IMR-90 (cell line): ENCODE measurements at regions of chr12 and their contacts with region 1.

Region 1: GRCh38 chr12:52870351-52871290 is 21.8 kb upstream of the KRT78 start:
- DNase-seq: peak; percentile 25
- ATAC-seq: peak; percentile 32
- H3K4me3 ChIP-seq: no peak overlapping the region
- H3K27ac ChIP-seq: peak overlapping the region; percentile 19; the same call in 1 of the 2 replicates
- H3K4me1 ChIP-seq: peaks cover 26% of the 10 kb centered on the region
- H3K27me3 ChIP-seq: no peaks in the 10 kb centered on the region
- CTCF ChIP-seq: peak; percentile 80
- POLR2A ChIP-seq: no peak
- RAD21 ChIP-seq: peak; percentile 91

Region 2: DNA sequence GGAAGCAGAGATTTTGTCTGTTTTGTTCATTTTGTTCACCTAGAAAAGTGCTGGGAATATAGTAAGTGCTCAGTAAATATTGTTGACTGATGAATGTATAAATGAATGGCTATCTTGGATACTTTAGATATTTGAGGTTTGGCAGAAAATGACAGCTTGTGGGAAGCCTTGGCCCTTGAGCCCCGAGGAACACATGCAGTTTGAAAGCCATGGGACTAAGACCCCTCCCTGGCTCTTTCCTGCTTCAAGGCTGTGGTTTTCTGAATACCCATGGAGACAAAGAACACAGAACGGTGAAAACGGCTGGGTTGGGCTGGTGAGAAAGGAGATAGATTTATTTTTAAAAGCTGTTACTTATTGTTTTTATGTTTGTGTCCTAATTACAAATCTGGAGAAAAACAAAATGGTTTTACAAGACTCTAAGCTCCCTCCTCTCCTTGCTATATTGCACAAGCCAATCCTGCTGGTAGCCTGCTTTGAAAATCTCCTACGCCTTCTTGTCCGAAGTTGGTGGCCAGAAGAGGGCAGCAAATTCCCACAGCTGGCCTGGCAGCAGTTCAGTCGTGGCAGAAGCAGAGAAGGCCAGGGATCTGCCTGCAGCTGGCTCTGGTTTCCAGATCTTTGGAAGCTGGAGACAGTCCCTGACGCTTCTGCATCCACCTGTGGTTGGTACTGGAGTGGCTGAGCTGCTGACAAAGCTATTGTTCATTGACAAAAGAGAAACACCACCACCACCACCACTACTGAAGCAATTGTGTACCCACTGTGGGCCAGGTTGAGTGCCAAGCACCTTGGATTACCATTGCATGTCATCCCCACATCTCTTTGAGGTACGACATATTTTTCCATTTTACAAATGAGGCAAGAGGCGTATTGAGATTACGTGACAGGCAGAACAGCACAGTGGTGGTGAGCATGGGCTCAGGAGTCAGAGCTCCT is 498.1 kb before region 1 on chr12:
- CTCF ChIA-PET with region 1: interaction called, 10 read pairs
- POLR2A ChIA-PET with region 1: no interaction called
- dilution Hi-C with region 1: no loop called
- in situ Hi-C with region 1: loop called (anchors 5 kb)
- intact Hi-C with region 1: no loop called
- DNase-seq: peak; percentile 81
- ATAC-seq: peak; percentile 94
- H3K4me3 ChIP-seq: no peak overlapping the region
- H3K27ac ChIP-seq: no peak overlapping the region
- H3K4me1 ChIP-seq: no peaks in the 10 kb centered on the region
- H3K27me3 ChIP-seq: peaks cover 36% of the 10 kb centered on the region
- CTCF ChIP-seq: peak; percentile 93
- POLR2A ChIP-seq: no peak
- RAD21 ChIP-seq: peak; percentile 92

Region 3: DNA sequence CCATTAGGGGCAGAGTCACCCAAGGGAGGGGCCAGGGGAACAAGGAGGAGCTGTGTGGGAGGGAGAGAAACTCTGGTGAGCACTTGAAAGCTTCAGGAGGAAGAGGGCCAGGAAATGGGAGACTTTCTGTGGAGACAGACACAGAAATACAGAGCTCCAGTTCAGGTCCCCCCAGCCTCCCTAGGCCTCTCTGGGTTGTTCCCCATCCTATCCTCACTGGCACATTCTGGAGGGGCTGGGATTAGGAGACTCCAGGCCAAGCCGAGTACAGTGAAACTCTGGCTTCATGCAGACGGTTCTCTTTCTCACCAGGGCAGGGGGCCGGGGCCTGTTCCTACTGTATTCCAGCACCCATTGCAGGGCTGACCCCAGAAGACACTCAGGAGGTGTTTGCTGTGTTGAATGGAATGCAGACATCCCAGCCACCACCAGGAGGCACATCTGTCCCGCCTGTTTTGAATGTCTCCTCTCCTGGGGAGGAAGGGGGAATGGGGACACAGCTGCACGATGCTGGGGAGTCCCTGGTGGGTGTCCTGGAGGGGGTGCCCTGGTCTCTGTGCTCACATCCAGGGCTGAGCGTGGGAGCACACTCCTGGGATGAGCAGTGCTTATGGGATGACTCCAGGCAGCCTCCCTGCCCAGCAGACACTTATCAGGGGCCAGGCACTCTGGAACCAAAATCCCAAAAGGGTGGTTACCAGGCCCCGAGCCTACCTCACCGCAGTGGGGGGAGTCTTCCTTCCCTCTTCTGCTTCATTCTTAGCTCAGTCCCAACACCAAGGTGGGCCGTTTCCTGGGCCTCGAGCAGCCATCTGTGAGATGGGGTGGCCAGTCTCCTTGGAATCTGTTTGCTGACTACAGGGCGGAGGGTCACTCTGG is 479.6 kb before region 1 on chr12:
- CTCF ChIA-PET with region 1: interaction called, 3 read pairs
- POLR2A ChIA-PET with region 1: no interaction called
- dilution Hi-C with region 1: no loop called
- in situ Hi-C with region 1: no loop called
- intact Hi-C with region 1: loop called (anchors 5 kb)
- DNase-seq: peak; percentile 13
- ATAC-seq: peak; percentile 57; the same call in 1 of the 2 replicates
- H3K4me3 ChIP-seq: no peak overlapping the region
- H3K27ac ChIP-seq: no peak overlapping the region
- H3K4me1 ChIP-seq: no peaks in the 10 kb centered on the region
- H3K27me3 ChIP-seq: peaks cover 44% of the 10 kb centered on the region
- CTCF ChIP-seq: peak; percentile 41
- POLR2A ChIP-seq: no peak
- RAD21 ChIP-seq: peak; percentile 54

Region 4: GRCh38 chr12:52949413-52950331 is 79.1 kb after region 1 on chr12:
- CTCF ChIA-PET with region 1: no interaction called
- POLR2A ChIA-PET with region 1: no interaction called
- dilution Hi-C with region 1: no loop called
- in situ Hi-C with region 1: no loop called
- intact Hi-C with region 1: no loop called
- DNase-seq: peak; percentile 95
- ATAC-seq: peak; percentile 80
- H3K4me3 ChIP-seq: peak overlapping the region; percentile 78
- H3K27ac ChIP-seq: peak overlapping the region; percentile 86
- H3K4me1 ChIP-seq: peaks cover 20% of the 10 kb centered on the region
- H3K27me3 ChIP-seq: no peaks in the 10 kb centered on the region
- CTCF ChIP-seq: no peak
- POLR2A ChIP-seq: peak; percentile 65; the same call in 1 of the 2 replicates
- RAD21 ChIP-seq: 0 out of 2 replicates have a peak, but pooled peaks have one; percentile 8